Pancreas (tissue), 10 donors: ENCODE measurements at regions of chr2 and their contacts with region 1.

Region 1: DNA sequence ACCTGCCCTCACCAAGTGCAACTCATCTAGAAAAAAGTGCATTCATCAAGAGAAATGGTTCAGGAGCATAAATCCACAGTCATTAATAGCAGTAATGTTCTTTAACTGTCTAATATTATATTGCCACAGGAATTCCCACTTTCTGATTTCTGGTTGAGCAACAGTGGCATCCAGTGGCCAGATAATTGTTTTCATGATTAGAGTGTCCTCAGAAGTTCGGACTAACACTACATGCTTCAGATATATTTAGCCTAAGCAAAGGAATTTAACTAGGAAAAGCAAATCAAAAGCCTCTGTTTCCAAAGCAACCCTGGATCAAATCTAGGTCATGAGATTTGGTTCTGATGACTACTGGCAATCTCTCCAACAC is 9.8 kb upstream of the ERBB4 start:
- DNase-seq: peak in 2 of 6 donors; percentile 21 to 33
- ATAC-seq: peak; percentile 72 to 91 (median 86)
- H3K4me3 ChIP-seq: no peak overlapping the region
- H3K27ac ChIP-seq: no peak overlapping the region
- H3K4me1 ChIP-seq: peaks cover 0 to 8% (median 0%) of the 10 kb centered on the region in 3 donors
- H3K27me3 ChIP-seq: no peaks in the 10 kb centered on the region
- CTCF ChIP-seq: peak in 3 of 4 donors; percentile 15 to 41 (median 29)

Region 2: GRCh38 chr2:211745295-211746097 is 802.9 kb before region 1 on chr2:
- intact Hi-C with region 1: loop called in 2 of 3 experiments (anchors 10 kb)
- DNase-seq: peak in 4 of 6 donors; percentile 18 to 68 (median 42)
- ATAC-seq: peak; percentile 75 to 98 (median 96)
- H3K4me3 ChIP-seq: no peak overlapping the region
- H3K27ac ChIP-seq: no peak overlapping the region
- H3K4me1 ChIP-seq: no peaks in the 10 kb centered on the region
- H3K27me3 ChIP-seq: no peaks in the 10 kb centered on the region
- CTCF ChIP-seq: peak; percentile 32 to 73 (median 66)

Region 3: DNA sequence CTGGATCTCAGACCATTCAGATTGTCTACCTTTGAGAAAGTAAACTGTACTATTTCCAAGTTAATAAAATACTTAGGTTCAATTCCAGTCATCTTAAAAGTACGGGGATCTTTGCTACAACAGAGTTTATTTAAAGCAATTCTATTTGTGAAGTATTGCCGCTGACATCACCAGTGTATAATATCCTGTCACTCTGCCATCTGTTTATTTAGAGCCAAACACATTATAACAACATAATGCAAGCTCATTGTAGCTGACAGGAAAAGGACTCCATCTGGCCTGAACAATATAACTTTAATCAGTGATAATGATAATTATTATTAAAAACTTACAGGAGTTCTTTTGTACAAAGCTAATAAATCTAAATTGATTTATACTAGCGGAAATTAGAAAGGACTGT is 796.6 kb before region 1 on chr2:
- intact Hi-C with region 1: loop called in 2 of 3 experiments (anchors 10 kb)
- DNase-seq: no peak
- ATAC-seq: no peak
- H3K4me3 ChIP-seq: no peak overlapping the region
- H3K27ac ChIP-seq: no peak overlapping the region
- H3K4me1 ChIP-seq: no peaks in the 10 kb centered on the region
- H3K27me3 ChIP-seq: no peaks in the 10 kb centered on the region
- CTCF ChIP-seq: no peak

Region 4: DNA sequence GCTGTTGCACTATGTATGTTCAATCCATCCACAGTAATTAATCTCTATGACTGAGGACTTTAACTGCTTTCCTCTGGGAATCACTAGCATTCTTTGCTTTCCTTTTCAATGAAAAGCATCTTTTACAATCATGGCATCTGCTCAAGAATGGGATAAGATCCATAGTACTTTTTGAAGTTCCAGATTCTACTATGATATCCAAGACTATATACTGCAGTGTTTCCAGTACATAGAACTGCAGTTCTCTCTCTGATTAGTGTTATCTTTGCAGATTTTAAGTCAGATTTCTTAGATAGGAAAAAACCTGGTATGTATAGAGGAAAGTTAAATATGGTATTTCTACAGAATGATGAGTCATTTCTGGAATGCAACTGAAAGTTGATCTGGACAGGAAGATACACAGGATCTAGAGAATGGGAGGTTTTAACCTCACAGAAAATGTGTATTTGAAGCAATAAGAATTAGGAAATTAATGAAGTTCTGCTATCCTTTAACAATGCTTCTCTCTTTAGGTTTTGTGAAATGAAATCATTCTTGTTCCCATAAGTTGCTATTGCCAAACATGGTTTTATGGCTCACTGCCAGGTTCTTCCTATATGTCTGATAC is 680.5 kb before region 1 on chr2:
- intact Hi-C with region 1: no loop called
- DNase-seq: no peak
- ATAC-seq: no peak
- H3K4me3 ChIP-seq: no peak overlapping the region
- H3K27ac ChIP-seq: no peak overlapping the region
- H3K4me1 ChIP-seq: no peaks in the 10 kb centered on the region
- H3K27me3 ChIP-seq: no peaks in the 10 kb centered on the region
- CTCF ChIP-seq: no peak

Region 5: GRCh38 chr2:213266421-213266820 is 718.0 kb after region 1 on chr2:
- intact Hi-C with region 1: no loop called
- DNase-seq: no peak
- ATAC-seq: no peak
- H3K4me3 ChIP-seq: no peak overlapping the region
- H3K27ac ChIP-seq: no peak overlapping the region
- H3K4me1 ChIP-seq: peaks cover 0 to 6% (median 1%) of the 10 kb centered on the region in 3 donors
- H3K27me3 ChIP-seq: no peaks in the 10 kb centered on the region
- CTCF ChIP-seq: no peak